GM18951 (cell line): ENCODE measurements at regions of chr3 and their contacts with region 1.

Region 1: DNA sequence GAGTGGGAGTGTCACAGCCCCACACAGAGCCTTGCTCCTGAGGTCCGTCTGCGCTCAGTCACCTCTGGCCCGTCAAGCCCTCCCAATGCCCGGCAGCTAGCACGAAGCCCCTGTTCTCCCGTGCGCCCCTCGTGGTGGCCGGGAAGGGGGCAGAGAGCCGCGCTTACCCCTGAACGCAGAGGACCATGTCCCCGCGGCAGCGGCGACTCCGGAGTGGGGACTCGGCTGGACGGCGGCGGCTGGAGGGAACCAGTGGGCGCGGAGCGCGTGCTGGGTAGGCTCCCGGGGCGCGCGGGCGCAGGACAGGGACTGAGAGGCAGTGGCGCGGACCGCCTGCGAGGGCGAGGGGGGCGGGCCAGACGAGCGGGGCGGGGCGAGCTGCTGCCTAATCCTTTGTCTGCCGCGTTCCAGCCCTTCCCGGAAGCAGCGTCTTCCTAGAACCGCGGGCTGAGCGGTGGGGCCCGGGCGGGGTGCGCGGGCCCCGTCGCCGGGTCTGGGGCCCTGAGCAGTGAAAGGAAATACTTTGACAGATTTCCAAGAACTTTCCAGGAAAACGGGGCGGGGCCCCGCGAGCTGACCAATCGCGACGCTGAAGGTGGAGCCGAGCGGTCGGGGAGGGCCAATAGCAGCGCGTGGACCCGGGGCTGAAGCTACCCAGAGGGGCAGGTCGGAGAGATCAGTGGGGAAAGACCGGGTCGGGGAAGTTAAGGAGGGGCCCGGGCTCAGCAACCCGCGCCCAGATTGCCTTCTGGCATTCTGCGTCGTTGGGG is at the start of gene CISH:
- POLR2A ChIP-seq: peak; percentile 72

Region 2: DNA sequence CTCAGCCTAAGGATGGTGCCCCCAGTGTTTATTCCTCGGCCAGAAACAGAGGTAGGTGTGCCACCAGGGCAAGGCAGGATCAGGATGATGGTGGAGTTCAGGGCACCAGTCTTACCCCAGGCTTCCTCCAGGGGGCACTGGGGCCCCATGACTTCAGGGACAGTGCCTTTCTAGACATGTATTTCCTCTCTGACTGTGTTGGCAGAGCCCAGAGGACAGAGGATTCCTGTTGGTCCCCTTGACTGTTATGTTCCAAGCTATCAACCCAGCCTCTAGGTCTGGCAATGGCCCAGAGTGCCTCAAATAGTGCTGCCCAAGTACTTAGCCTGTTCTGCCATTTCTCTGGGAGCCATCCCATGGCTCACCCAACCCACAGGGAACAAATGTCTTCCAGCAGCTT is 39.5 kb before region 1 on chr3:
- in situ Hi-C with region 1: loop called (anchors 5 kb)
- POLR2A ChIP-seq: no peak

Region 3: DNA sequence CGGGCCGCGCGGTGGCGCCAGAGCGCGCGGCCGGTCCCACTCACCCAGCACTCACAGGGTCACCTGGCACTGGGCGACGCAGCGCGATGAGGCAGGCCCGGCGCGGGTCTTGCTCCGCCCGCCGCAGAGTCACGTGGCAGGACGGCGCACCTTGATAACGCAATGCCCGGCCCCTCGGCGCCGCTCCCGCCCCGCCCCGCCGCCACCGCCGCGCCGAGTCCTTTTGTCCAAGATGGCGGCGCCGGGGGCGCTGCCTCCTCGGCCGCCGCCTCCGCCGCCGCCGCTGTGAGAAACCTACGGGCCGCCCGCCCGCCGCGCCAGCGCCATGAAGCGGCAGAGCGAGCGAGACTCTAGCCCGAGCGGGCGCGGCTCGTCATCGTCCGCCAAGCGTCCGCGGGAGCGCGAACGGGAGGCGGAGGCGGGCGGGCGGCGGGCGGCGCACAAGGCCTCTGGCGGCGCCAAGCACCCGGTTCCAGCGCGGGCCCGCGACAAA is 779.5 kb after region 1 on chr3 and contains the start of gene RBM15B:
- in situ Hi-C with region 1: loop called (anchors 25 kb)
- POLR2A ChIP-seq: peak; percentile 84